ENCODE measurements at regions of chr14 and their contacts with region 1.

Region 1: GRCh38 chr14:73458151-73458976 is at the start of gene NUMB:
- DNase-seq: peak; percentile 100
- H3K4me3 ChIP-seq: peak within 1 kb of the TSS; percentile 94
- H3K27ac ChIP-seq: peak within 1 kb of the TSS; percentile 74
- H3K27me3 ChIP-seq: no peaks in the 10 kb centered on the region
- CTCF ChIP-seq: no peak

Region 2: DNA sequence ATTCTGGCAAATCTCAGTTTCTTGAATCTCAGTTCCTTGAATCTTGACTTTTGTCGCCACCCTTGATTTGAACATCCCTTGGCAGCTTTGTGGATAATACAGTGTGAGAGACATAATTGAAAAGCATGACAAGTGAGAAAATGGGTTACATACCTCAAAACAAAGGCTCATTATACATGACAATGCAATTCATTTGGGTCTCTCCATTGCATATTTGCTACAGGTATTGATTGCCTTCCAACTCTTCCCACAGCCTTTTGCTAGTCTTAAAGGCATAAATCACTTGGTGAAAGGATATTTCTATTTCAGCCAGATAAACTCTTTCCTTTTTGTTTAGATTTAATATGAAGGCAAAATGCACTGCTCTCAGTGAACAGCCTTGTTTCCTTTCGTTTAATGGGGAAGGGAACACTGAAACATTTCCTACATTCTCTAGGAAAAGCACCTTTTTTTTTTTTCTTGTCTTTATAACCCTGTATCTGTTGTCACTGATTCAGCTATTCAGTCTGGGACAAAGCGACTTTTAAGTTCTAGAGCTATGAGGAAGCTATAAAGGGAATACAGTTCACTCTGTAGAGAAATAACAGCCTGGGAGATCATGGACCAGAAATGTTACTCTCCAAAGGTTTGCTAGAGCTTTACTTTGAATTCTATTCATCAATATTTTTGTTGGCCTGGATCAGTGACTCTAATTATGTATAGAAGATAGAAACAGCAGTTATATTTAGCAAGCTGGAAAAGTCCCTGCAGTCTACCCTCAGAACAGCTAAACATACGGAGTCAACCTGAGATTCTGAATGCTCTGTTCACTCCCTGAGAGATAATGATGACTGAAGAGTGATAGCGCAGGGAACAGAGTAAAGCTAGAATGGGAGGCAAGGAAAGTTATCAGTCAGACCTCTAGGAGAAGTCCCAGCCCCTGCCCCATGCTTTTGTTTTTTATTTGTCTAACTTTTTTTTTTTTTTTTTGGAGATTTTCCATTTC is 1214.8 kb before region 1 on chr14:
- in situ Hi-C with region 1: no loop called
- DNase-seq: no peak
- H3K4me3 ChIP-seq: no peak overlapping the region
- H3K27ac ChIP-seq: no peak overlapping the region
- H3K27me3 ChIP-seq: no peaks in the 10 kb centered on the region
- CTCF ChIP-seq: no peak

Region 3: GRCh38 chr14:73049428-73049827 is 408.9 kb before region 1 on chr14:
- in situ Hi-C with region 1: no loop called
- DNase-seq: no peak
- H3K4me3 ChIP-seq: no peak overlapping the region
- H3K27ac ChIP-seq: no peak overlapping the region
- H3K27me3 ChIP-seq: no peaks in the 10 kb centered on the region
- CTCF ChIP-seq: no peak

Region 4: GRCh38 chr14:73180385-73180805 is 278.0 kb before region 1 on chr14:
- in situ Hi-C with region 1: loop called (anchors 25 kb)
- DNase-seq: peak; percentile 24
- H3K4me3 ChIP-seq: no peak overlapping the region
- H3K27ac ChIP-seq: no peak overlapping the region
- H3K27me3 ChIP-seq: no peaks in the 10 kb centered on the region
- CTCF ChIP-seq: no peak

Region 5: GRCh38 chr14:73295198-73295796 is 163.1 kb before region 1 on chr14:
- in situ Hi-C with region 1: loop called (anchors 25 kb)
- DNase-seq: peak; percentile 14
- H3K4me3 ChIP-seq: no peak overlapping the region
- H3K27ac ChIP-seq: no peak overlapping the region
- H3K27me3 ChIP-seq: no peaks in the 10 kb centered on the region
- CTCF ChIP-seq: peak; percentile 58

Region 6: DNA sequence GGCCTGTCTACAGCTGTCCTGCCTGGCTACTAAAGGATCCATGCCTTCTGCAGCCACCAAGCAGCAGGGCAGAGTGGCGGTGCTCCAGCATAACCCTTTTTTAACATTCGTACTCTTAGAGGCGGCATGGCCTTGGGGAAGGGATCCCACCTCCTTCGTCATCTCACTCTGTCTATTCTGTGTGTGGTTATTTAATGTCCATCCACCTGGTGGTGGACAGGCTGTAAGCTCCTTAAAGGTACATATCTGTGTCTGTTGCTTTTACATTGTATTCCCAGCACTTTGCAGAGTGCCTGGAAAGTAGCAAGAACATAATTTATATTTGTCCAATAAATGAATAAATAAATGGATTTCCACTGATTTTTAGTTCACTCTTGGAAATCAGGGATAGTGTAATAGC is 62.9 kb after region 1 on chr14:
- in situ Hi-C with region 1: no loop called
- DNase-seq: no peak
- H3K4me3 ChIP-seq: no peak overlapping the region
- H3K27ac ChIP-seq: no peak overlapping the region
- H3K27me3 ChIP-seq: no peaks in the 10 kb centered on the region
- CTCF ChIP-seq: no peak